Activated B cell treated with CpG ODN at 0.5 μM for 24 hours (primary cell): ENCODE measurements at regions of chr17 and their contacts with region 1.

Region 1: GRCh38 chr17:46044286-46044928 is 45.4 kb downstream of the STH start:
- DNase-seq: no peak
- ATAC-seq: peak; percentile 61
- H3K4me3 Mint-ChIP-seq: no peak overlapping the region
- H3K27ac Mint-ChIP-seq: no peak overlapping the region
- H3K4me1 Mint-ChIP-seq: peaks cover 2% of the 10 kb centered on the region
- H3K27me3 Mint-ChIP-seq: no peaks in the 10 kb centered on the region
- CTCF ChIP-seq: no peak

Region 2: GRCh38 chr17:45942284-45942683 is 102.1 kb before region 1 on chr17:
- CTCF ChIA-PET with region 1: no interaction called
- POLR2A ChIA-PET with region 1: no interaction called
- intact Hi-C with region 1: no loop called
- DNase-seq: no peak
- ATAC-seq: no peak
- H3K4me3 Mint-ChIP-seq: no peak overlapping the region
- H3K27ac Mint-ChIP-seq: no peak overlapping the region
- H3K4me1 Mint-ChIP-seq: no peaks in the 10 kb centered on the region
- H3K27me3 Mint-ChIP-seq: peaks cover 12% of the 10 kb centered on the region
- CTCF ChIP-seq: no peak

Region 3: GRCh38 chr17:46002311-46002972 is 42.0 kb before region 1 on chr17:
- CTCF ChIA-PET with region 1: interaction called, 49 read pairs
- POLR2A ChIA-PET with region 1: no interaction called
- intact Hi-C with region 1: loop called (anchors 1 kb)
- DNase-seq: peak; percentile 60
- ATAC-seq: peak; percentile 95
- H3K4me3 Mint-ChIP-seq: no peak overlapping the region
- H3K27ac Mint-ChIP-seq: no peak overlapping the region
- H3K4me1 Mint-ChIP-seq: peaks cover 2% of the 10 kb centered on the region
- H3K27me3 Mint-ChIP-seq: no peaks in the 10 kb centered on the region
- CTCF ChIP-seq: peak; percentile 74

Region 4: GRCh38 chr17:46020023-46020761 is 24.2 kb before region 1 on chr17:
- CTCF ChIA-PET with region 1: interaction called, 12 read pairs
- POLR2A ChIA-PET with region 1: interaction called, 3 read pairs
- intact Hi-C with region 1: no loop called
- DNase-seq: peak; percentile 40
- ATAC-seq: peak; percentile 93
- H3K4me3 Mint-ChIP-seq: peak overlapping the region; percentile 17
- H3K27ac Mint-ChIP-seq: peak overlapping the region; percentile 91
- H3K4me1 Mint-ChIP-seq: peaks cover 57% of the 10 kb centered on the region
- H3K27me3 Mint-ChIP-seq: no peaks in the 10 kb centered on the region
- CTCF ChIP-seq: no peak

Region 5: DNA sequence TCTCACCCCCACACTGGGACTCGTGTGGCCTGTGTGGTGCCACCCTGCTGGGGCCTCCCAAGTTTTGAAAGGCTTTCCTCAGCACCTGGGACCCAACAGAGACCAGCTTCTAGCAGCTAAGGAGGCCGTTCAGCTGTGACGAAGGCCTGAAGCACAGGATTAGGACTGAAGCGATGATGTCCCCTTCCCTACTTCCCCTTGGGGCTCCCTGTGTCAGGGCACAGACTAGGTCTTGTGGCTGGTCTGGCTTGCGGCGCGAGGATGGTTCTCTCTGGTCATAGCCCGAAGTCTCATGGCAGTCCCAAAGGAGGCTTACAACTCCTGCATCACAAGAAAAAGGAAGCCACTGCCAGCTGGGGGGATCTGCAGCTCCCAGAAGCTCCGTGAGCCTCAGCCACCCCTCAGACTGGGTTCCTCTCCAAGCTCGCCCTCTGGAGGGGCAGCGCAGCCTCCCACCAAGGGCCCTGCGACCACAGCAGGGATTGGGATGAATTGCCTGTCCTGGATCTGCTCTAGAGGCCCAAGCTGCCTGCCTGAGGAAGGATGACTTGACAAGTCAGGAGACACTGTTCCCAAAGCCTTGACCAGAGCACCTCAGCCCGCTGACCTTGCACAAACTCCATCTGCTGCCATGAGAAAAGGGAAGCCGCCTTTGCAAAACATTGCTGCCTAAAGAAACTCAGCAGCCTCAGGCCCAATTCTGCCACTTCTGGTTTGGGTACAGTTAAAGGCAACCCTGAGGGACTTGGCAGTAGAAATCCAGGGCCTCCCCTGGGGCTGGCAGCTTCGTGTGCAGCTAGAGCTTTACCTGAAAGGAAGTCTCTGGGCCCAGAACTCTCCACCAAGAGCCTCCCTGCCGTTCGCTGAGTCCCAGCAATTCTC is 18.0 kb before region 1 on chr17:
- CTCF ChIA-PET with region 1: interaction called, 14 read pairs
- POLR2A ChIA-PET with region 1: interaction called, 5 read pairs
- intact Hi-C with region 1: no loop called
- DNase-seq: no peak
- ATAC-seq: peak; percentile 58
- H3K4me3 Mint-ChIP-seq: no peak overlapping the region
- H3K27ac Mint-ChIP-seq: peak overlapping the region; percentile 86
- H3K4me1 Mint-ChIP-seq: peaks cover 72% of the 10 kb centered on the region
- H3K27me3 Mint-ChIP-seq: no peaks in the 10 kb centered on the region
- CTCF ChIP-seq: no peak

Region 6: GRCh38 chr17:46061435-46061834 is 17.0 kb after region 1 on chr17:
- CTCF ChIA-PET with region 1: interaction called, 12 read pairs
- POLR2A ChIA-PET with region 1: interaction called, 5 read pairs
- intact Hi-C with region 1: no loop called
- DNase-seq: no peak
- ATAC-seq: no peak
- H3K4me3 Mint-ChIP-seq: no peak overlapping the region
- H3K27ac Mint-ChIP-seq: no peak overlapping the region
- H3K4me1 Mint-ChIP-seq: no peaks in the 10 kb centered on the region
- H3K27me3 Mint-ChIP-seq: no peaks in the 10 kb centered on the region
- CTCF ChIP-seq: no peak

Region 7: GRCh38 chr17:46184696-46185095 is 140.3 kb after region 1 on chr17:
- CTCF ChIA-PET with region 1: interaction called, 10 read pairs
- POLR2A ChIA-PET with region 1: no interaction called
- intact Hi-C with region 1: no loop called
- DNase-seq: no peak
- ATAC-seq: no peak
- H3K4me3 Mint-ChIP-seq: no peak overlapping the region
- H3K27ac Mint-ChIP-seq: no peak overlapping the region
- H3K4me1 Mint-ChIP-seq: peaks cover 92% of the 10 kb centered on the region
- H3K27me3 Mint-ChIP-seq: no peaks in the 10 kb centered on the region
- CTCF ChIP-seq: no peak

Region 8: DNA sequence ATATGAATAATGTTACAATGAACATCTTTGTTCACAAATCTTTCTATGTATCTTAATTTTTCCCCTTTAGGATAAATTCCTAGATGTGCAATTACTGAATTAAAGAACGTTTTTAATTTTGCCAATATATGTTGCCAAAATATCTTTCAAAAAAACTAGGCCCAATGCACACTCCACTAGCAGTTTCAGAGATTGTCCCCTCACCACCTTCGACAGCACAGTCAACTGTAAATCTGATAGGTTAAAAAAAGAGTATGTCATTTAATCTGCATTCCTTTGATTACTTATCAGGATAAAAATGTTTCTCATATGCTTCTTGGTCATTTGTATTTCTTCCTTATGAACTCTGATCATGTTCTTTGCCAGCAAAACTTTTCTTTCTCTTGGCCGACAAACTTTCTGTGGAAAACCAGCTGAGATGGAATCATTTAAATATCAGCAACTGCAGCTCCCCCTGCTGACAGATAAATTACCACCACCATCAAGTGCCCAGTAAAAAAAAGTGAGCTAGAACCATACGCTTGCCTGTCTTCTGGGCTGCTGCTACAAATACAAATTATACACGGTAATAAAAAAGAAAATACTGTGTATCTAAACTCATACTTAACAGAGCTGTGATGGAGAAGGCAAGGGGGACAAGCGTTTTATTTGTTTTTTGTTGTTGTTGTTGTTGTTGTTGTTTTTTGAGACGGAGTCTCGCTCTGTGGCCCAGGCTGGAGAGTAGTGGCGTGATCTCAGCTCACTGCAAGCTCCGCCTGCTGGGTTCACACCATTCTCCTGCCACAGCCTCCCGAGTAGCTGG is 168.4 kb after region 1 on chr17:
- CTCF ChIA-PET with region 1: interaction called, 58 read pairs
- POLR2A ChIA-PET with region 1: interaction called, 5 read pairs
- intact Hi-C with region 1: loop called (anchors 1 kb)
- DNase-seq: no peak
- ATAC-seq: peak; percentile 77
- H3K4me3 Mint-ChIP-seq: no peak overlapping the region
- H3K27ac Mint-ChIP-seq: no peak overlapping the region
- H3K4me1 Mint-ChIP-seq: peaks cover 7% of the 10 kb centered on the region
- H3K27me3 Mint-ChIP-seq: no peaks in the 10 kb centered on the region
- CTCF ChIP-seq: peak; percentile 63